A549 (cell line): ENCODE measurements at regions of chr6 and their contacts with region 1.

Region 1: DNA sequence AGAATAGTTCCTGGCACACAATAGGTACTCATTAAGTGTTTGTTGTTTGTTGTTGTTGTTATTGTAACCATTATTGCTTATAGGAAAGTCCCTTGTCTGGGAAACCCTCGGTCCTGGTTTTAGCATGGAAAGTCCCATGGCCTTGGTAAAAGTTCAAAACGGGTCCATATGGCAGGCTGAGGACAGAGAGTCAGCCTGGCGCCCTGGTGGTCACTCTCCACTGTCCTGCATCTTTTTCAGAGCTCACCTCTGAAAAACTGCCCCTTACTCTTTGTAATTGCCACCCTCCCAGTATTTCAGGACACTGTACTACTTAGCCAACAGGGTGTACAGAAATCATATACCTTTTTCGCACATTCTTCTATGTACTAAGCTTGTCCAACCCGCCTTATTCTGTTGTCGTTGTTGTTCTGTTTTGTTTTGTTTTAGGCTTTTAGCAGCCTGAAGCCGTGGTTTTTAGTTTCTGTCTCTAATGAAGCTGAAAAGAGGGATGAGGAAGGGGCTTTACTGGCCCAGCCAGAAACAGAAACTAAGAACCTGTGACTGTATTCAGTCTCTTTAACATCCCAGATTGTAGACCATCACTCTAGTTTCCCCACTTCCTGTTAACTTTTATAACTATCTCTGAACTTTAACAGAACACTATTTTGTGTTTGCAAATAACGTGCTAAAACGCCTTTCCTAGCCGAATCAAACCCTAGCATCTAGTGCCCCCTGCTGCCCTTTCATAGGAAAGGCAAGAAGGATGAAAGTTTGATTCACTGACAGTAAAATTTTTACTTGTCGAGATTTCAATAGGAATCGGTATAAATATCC is 7.6 kb upstream of the TMEM14A start:
- DNase-seq: peak; percentile 49 to 69
- ATAC-seq: peak; percentile 41 to 60; a peak in 4 of 6 replicates
- H3K4me3 ChIP-seq: peak overlapping the region; percentile 57
- H3K27ac ChIP-seq: peak overlapping the region; percentile 54 to 95; a peak in 4 of 6 replicates
- H3K4me1 ChIP-seq: peaks cover 11% of the 10 kb centered on the region; the same call in 1 of the 3 replicates
- CTCF ChIP-seq: peak; percentile 86
- EP300 ChIP-seq: no peak
- POLR2A ChIP-seq: no peak
- RAD21 ChIP-seq: peak; percentile 90 to 94

Region 2: GRCh38 chr6:52407467-52407866 is 255.9 kb before region 1 on chr6:
- CTCF ChIA-PET with region 1: interaction called, 15 read pairs
- POLR2A ChIA-PET with region 1: no interaction called
- DNase-seq: peak; percentile 48 to 68
- ATAC-seq: peak in 1 of 2 experiments; percentile 84; a peak in 3 of 6 replicates
- H3K4me3 ChIP-seq: no peak overlapping the region
- H3K27ac ChIP-seq: no peak overlapping the region
- H3K4me1 ChIP-seq: no peaks in the 10 kb centered on the region
- CTCF ChIP-seq: peak; percentile 52
- EP300 ChIP-seq: no peak
- POLR2A ChIP-seq: no peak
- RAD21 ChIP-seq: peak; percentile 64 to 70

Region 3: DNA sequence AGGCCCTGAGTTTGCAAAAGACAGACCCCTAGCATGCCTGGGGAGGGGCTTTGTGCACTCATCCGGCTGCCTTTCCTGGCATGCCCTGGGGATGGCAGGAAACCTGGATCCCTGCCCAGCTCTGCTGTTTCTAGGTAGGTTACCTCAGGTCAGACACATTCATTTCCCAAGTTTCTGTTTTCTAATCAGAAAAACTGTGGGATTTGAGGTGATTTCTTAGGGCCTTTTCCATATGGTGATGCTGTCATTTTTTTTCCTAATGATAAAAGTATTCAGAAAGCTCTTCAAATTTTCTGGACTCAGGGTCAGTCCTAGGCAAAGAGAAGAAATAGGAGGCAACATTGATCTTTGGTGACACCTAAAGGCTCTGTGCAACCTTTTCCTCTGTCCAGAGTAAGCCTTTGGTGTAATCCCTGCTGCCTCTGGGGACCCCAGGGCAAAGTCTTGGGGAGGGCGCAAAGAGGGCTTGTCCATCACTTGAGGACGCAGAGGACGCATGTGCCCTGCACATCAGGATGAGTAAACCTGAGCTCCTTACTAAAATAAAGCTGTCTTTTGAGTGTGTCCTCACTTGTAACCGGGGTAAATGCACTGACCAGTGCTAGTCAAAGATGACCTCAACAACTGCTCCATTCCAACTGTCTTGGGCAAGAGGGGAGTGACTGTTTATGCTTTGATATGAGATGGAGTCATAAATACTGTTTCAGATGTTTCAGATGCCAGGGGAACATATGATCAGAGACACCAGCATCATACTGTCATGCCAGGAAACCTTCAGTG is 73.0 kb before region 1 on chr6:
- CTCF ChIA-PET with region 1: interaction called, 12 read pairs
- POLR2A ChIA-PET with region 1: no interaction called
- DNase-seq: no peak
- ATAC-seq: peak; percentile 71 to 73; a peak in 5 of 6 replicates
- H3K4me3 ChIP-seq: no peak overlapping the region
- H3K27ac ChIP-seq: peak overlapping the region in 1 of 2 experiments; percentile 60; a peak in 2 of 6 replicates
- H3K4me1 ChIP-seq: peaks cover 34% of the 10 kb centered on the region
- CTCF ChIP-seq: peak; percentile 27
- EP300 ChIP-seq: no peak
- POLR2A ChIP-seq: no peak
- RAD21 ChIP-seq: peak; percentile 44 to 56

Region 4: DNA sequence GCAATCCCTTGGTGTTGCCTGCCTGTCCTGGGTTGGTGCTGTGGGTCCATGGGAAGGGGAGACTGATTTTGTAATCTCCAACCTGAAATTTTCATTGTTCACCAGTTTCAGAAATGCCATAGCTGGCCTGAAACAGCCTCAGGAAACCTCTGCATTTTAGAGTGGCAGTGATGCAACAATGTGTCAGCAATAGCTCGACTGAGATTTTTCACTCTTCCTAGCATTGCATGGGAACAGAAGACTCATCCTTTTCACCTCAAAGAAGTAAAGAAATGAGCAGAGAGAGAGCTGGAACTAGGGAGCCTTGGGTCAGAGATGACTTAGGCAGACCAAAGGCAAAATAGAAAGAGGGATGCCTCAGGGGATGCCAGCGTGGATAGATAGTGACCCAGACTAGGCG is 16.1 kb before region 1 on chr6:
- CTCF ChIA-PET with region 1: interaction called, 27 read pairs
- POLR2A ChIA-PET with region 1: no interaction called
- DNase-seq: no peak
- ATAC-seq: no peak
- H3K4me3 ChIP-seq: no peak overlapping the region
- H3K27ac ChIP-seq: no peak overlapping the region
- H3K4me1 ChIP-seq: no peaks in the 10 kb centered on the region
- CTCF ChIP-seq: no peak
- EP300 ChIP-seq: no peak
- POLR2A ChIP-seq: no peak
- RAD21 ChIP-seq: no peak

Region 5: GRCh38 chr6:52653151-52653550 is 10.2 kb before region 1 on chr6:
- CTCF ChIA-PET with region 1: interaction called, 27 read pairs
- POLR2A ChIA-PET with region 1: no interaction called
- DNase-seq: no peak
- ATAC-seq: no peak
- H3K4me3 ChIP-seq: no peak overlapping the region
- H3K27ac ChIP-seq: no peak overlapping the region
- H3K4me1 ChIP-seq: no peaks in the 10 kb centered on the region
- CTCF ChIP-seq: no peak
- EP300 ChIP-seq: no peak
- POLR2A ChIP-seq: no peak
- RAD21 ChIP-seq: no peak

Region 6: DNA sequence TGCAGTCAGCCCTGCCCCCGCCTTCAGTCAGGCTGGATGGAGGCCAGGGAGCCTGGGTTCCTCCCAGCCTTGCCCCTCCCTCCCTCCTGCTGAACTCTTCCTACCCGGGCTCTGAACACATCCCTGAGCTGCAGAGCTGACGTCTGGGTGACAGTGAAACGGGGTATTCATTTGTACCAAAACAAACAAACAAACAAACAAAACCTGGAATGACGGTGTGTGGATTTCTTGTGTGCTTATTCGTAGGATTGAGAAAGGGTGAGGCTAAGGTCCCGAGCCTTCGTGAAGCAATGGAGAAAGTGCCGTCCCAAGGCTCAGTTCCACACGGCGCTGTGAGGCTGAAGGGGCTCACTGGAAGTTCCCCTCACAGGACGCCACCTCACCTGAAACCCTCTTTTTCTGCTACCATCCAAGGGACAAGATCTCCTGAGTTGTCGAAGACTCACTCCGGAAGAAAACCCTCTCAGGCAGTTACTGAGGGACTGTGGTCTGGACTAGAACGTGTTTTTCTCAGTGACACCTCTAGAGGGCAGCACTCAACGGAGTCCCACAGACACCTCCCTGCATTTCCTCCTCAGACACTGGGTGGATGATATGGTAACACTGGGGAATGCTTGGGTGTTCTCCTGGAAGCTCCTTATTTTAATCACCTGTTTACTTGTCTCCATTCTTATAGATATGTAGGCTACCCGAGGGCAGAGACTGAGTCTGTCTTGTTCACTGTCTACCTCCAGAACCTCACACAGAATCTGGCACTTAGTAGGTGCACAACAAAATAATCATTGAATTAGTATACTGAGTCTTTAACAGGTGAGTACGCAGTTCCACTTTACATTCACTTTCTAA is 218.9 kb after region 1 on chr6:
- CTCF ChIA-PET with region 1: no interaction called
- POLR2A ChIA-PET with region 1: no interaction called
- DNase-seq: peak; percentile 74 to 75
- ATAC-seq: peak; percentile 100
- H3K4me3 ChIP-seq: peak overlapping the region; percentile 58
- H3K27ac ChIP-seq: peak overlapping the region; percentile 84 to 90
- H3K4me1 ChIP-seq: peaks cover 8% of the 10 kb centered on the region; the same call in 2 of the 3 replicates
- CTCF ChIP-seq: peak; percentile 76
- EP300 ChIP-seq: no peak
- POLR2A ChIP-seq: no peak
- RAD21 ChIP-seq: peak; percentile 62 to 66

Region 7: GRCh38 chr6:53926525-53926924 is 1263.2 kb after region 1 on chr6:
- CTCF ChIA-PET with region 1: no interaction called
- POLR2A ChIA-PET with region 1: no interaction called
- DNase-seq: no peak
- ATAC-seq: no peak
- H3K4me3 ChIP-seq: no peak overlapping the region
- H3K27ac ChIP-seq: no peak overlapping the region
- H3K4me1 ChIP-seq: no peaks in the 10 kb centered on the region
- CTCF ChIP-seq: no peak
- EP300 ChIP-seq: no peak
- POLR2A ChIP-seq: no peak
- RAD21 ChIP-seq: no peak